Endothelial cell of umbilical vein (primary cell): ENCODE measurements at regions of chr13 and their contacts with region 1.

Region 1: DNA sequence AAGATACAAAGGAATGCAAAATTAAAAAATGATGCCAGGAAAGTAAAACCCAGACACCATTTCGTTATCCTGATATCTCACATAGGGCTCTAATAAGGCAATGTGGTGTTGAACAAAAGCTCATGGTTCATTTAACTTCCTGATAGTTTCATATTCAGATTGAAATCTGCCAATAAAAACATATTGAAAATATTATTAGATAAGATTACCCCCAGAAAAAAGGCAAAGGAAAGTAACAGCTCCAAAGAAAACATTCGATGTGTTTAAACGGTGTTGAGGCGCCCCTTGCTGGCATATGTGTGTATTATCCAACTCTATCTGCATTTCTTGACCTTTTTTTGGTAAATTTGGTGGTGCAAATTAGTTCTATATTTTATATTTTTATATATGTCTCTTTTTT is 75.9 kb downstream of the ESD start:
- DNase-seq: peak; percentile 83
- H3K4me3 ChIP-seq: no peak overlapping the region
- H3K27ac ChIP-seq: no peak overlapping the region
- H3K4me1 ChIP-seq: peaks cover 12% of the 10 kb centered on the region
- H3K27me3 ChIP-seq: peaks cover 0 to 9% of the 10 kb centered on the region in 2 experiments
- CTCF ChIP-seq: peak; percentile 36 to 51
- POLR2A ChIP-seq: no peak

Region 2: DNA sequence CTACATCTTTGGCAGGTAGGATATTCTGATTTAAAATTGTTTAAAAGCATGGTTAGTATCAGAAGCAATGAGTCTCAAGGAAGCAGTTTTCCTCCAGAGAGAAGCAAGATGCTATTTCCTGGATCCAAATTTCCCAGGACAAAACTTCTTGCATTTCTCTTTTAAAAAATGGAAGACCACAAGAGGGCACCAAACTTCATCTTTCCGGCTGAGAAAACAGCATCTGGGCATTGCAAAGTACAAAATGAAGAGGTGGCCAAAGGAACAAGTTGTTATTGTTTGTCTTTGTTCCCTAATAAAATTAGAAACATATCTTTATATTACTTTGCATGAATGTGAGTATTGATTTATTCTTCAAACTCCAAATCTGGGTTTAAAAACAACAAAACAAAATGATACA is 228.1 kb before region 1 on chr13:
- CTCF ChIA-PET with region 1: interaction called, 76 read pairs
- POLR2A ChIA-PET with region 1: no interaction called
- dilution Hi-C with region 1: no loop called
- intact Hi-C with region 1: loop called (anchors 1 kb)
- DNase-seq: peak; percentile 59
- H3K4me3 ChIP-seq: no peak overlapping the region
- H3K27ac ChIP-seq: no peak overlapping the region
- H3K4me1 ChIP-seq: no peaks in the 10 kb centered on the region
- H3K27me3 ChIP-seq: peaks cover 20% of the 10 kb centered on the region in 2 experiments
- CTCF ChIP-seq: peak; percentile 33
- POLR2A ChIP-seq: no peak

Region 3: DNA sequence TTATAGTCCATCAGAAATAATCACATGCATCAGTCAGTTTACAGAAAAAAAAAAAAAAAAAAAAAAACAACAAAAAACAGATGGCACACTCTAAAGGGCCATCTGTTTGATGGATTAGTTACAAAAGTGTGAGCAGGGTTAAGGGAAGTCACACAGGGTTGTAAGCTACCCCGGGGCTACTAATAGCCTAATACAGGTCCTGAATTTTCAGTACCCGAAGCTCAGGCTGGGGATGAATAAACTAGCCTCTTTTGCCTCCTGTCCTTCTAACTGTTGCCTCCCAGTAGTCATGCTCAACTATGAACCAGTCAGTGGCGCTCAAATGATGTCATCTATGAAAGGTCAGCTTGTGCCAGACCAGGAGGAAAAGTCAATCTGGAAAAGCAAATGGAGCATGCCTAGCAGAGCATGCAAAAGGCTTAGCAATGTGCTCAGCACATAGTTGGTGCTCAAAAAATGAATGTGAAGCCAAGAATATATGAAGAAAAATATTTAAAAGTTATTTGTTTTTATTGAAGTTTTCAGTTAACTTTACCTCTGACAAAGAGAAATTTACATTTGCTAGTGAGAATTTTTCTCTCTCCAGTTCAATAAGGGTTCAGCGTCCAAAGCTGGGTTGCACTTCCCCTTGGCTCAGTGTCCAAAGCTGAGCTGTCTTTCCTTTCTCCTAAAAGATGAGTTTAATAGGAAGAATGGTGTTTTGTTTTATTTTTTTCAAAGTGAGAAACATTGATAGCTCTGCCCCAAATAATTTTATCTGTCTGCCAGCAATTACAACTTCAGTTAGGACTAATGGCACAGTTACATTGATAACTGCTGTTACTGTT is 198.9 kb before region 1 on chr13:
- CTCF ChIA-PET with region 1: interaction called, 11 read pairs
- POLR2A ChIA-PET with region 1: no interaction called
- dilution Hi-C with region 1: no loop called
- intact Hi-C with region 1: loop called (anchors 1 kb)
- DNase-seq: no peak
- H3K4me3 ChIP-seq: no peak overlapping the region
- H3K27ac ChIP-seq: no peak overlapping the region
- H3K4me1 ChIP-seq: peaks cover 4% of the 10 kb centered on the region
- H3K27me3 ChIP-seq: peaks cover 6 to 9% of the 10 kb centered on the region in 2 experiments
- CTCF ChIP-seq: no peak
- POLR2A ChIP-seq: no peak

Region 4: DNA sequence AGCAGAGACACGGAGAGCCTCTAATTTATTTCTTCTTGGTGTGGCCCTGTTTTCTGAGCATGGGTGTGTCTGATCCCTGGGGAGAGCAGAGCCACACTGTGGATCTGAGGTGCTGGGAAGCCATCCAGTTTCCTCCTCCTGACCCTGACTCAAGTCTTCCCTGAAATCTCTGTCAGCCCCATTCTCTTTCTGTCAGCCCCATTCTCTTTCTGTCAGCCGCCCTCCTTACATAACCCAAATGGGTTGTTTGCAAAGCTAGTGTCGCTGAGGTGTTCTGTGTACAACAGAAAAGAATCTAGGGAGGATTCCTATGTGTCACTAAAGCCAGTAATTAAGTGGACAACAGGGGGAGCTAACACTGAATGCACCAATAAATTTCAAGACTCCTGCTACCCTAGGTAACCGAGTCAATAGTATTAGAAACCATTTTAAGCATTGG is 117.9 kb before region 1 on chr13:
- CTCF ChIA-PET with region 1: interaction called, 9 read pairs
- POLR2A ChIA-PET with region 1: no interaction called
- dilution Hi-C with region 1: no loop called
- intact Hi-C with region 1: loop called (anchors 1 kb)
- DNase-seq: peak; percentile 23
- H3K4me3 ChIP-seq: no peak overlapping the region
- H3K27ac ChIP-seq: no peak overlapping the region
- H3K4me1 ChIP-seq: peaks cover 21% of the 10 kb centered on the region
- H3K27me3 ChIP-seq: no peaks in the 10 kb centered on the region
- CTCF ChIP-seq: peak; percentile 12 to 14
- POLR2A ChIP-seq: no peak

Region 5: DNA sequence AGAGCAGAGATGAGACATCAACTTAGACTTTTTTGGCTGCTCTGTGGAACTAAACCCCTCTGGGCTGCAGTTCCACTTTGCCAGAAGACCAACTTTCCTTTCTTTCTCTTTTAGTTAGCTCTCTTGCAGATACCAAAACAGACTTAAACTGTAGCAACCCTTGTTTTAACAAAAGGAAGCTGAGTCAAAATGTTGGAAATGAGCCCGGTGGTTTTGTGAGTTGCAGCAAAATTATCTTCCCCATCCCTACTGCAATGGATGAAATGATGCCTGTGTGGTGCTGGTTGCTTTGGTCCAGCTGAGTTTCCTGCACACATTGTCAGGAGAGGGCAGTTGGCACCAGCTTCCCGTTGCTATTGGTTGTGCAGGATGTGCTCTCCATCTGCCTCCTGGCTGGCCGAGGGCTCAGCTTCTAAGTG is 52.7 kb before region 1 on chr13:
- CTCF ChIA-PET with region 1: interaction called, 7 read pairs
- POLR2A ChIA-PET with region 1: no interaction called
- dilution Hi-C with region 1: no loop called
- intact Hi-C with region 1: loop called (anchors 2 kb)
- DNase-seq: peak; percentile 89
- H3K4me3 ChIP-seq: no peak overlapping the region
- H3K27ac ChIP-seq: peak overlapping the region; percentile 13
- H3K4me1 ChIP-seq: peaks cover 38% of the 10 kb centered on the region
- H3K27me3 ChIP-seq: no peaks in the 10 kb centered on the region
- CTCF ChIP-seq: no peak
- POLR2A ChIP-seq: no peak

Region 6: GRCh38 chr13:47087841-47088240 is 366.8 kb after region 1 on chr13:
- CTCF ChIA-PET with region 1: no interaction called
- POLR2A ChIA-PET with region 1: no interaction called
- dilution Hi-C with region 1: no loop called
- intact Hi-C with region 1: no loop called
- DNase-seq: no peak
- H3K4me3 ChIP-seq: no peak overlapping the region
- H3K27ac ChIP-seq: no peak overlapping the region
- H3K4me1 ChIP-seq: no peaks in the 10 kb centered on the region
- H3K27me3 ChIP-seq: no peaks in the 10 kb centered on the region
- CTCF ChIP-seq: no peak
- POLR2A ChIP-seq: no peak